H1 (cell line): ENCODE measurements at regions of chr15 and their contacts with region 1.

Region 1: DNA sequence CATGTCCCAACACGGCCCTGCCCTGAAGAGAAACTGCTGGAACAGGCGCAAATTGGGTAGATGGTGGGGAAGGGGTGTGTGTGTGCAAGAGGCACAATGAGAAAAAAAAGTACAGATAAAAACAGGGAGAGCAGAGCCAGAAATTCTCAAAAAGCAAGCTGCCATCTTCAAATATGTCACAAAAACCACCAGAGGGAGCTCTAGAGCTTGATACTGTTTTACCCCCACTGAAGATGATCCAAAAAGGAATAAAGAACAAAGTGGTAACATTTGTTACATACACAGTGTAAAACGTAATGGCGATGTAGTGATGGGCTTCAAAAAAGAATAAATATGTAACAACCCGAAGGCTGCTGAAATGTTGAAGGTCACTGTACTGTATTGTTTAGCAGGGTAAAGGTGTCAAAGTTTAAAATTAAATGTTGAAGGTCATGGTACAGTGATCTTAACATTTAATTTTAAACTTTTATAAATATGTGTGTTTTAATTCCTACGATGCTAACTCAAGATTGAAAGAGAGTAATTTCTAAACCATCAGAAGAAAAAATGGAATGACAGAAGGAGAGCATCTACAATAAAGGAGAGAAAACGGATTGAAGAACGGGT is 6.0 kb downstream of the SNRPA1 start:
- DNase-seq: no peak
- H3K4me3 ChIP-seq: no peak overlapping the region
- H3K27ac ChIP-seq: no peak overlapping the region
- H3K4me1 ChIP-seq: peaks cover 3 to 5% (median 4%) of the 10 kb centered on the region in 4 experiments; a peak in 4 of 7 replicates
- H3K27me3 ChIP-seq: no peaks in the 10 kb centered on the region
- CTCF ChIP-seq: peak in 2 of 3 experiments; percentile 51 to 55; a peak in 2 of 4 replicates
- EP300 ChIP-seq: no peak
- POLR2A ChIP-seq: no peak
- RAD21 ChIP-seq: peak; percentile 61 to 62

Region 2: GRCh38 chr15:101167753-101168463 is 121.1 kb before region 1 on chr15:
- CTCF ChIA-PET with region 1: no interaction called
- POLR2A ChIA-PET with region 1: no interaction called
- DNase-seq: no peak
- H3K4me3 ChIP-seq: no peak overlapping the region
- H3K27ac ChIP-seq: no peak overlapping the region
- H3K4me1 ChIP-seq: peaks cover 0 to 8% (median 0%) of the 10 kb centered on the region in 4 experiments; a peak in 3 of 7 replicates
- H3K27me3 ChIP-seq: no peaks in the 10 kb centered on the region
- CTCF ChIP-seq: no peak
- EP300 ChIP-seq: no peak
- POLR2A ChIP-seq: no peak
- RAD21 ChIP-seq: no peak

Region 3: GRCh38 chr15:101269479-101270223 is 19.4 kb before region 1 on chr15:
- CTCF ChIA-PET with region 1: interaction called, 19 read pairs
- POLR2A ChIA-PET with region 1: interaction called, 3 read pairs
- DNase-seq: no peak
- H3K4me3 ChIP-seq: no peak overlapping the region
- H3K27ac ChIP-seq: no peak overlapping the region
- H3K4me1 ChIP-seq: peaks cover 0 to 2% (median 0%) of the 10 kb centered on the region in 4 experiments; a peak in 1 of 7 replicates
- H3K27me3 ChIP-seq: no peaks in the 10 kb centered on the region
- CTCF ChIP-seq: peak; percentile 70 to 82 (median 77)
- EP300 ChIP-seq: no peak
- POLR2A ChIP-seq: peak in 1 of 2 experiments; percentile 41; a peak in 1 of 3 replicates
- RAD21 ChIP-seq: peak; percentile 51 to 68

Region 4: DNA sequence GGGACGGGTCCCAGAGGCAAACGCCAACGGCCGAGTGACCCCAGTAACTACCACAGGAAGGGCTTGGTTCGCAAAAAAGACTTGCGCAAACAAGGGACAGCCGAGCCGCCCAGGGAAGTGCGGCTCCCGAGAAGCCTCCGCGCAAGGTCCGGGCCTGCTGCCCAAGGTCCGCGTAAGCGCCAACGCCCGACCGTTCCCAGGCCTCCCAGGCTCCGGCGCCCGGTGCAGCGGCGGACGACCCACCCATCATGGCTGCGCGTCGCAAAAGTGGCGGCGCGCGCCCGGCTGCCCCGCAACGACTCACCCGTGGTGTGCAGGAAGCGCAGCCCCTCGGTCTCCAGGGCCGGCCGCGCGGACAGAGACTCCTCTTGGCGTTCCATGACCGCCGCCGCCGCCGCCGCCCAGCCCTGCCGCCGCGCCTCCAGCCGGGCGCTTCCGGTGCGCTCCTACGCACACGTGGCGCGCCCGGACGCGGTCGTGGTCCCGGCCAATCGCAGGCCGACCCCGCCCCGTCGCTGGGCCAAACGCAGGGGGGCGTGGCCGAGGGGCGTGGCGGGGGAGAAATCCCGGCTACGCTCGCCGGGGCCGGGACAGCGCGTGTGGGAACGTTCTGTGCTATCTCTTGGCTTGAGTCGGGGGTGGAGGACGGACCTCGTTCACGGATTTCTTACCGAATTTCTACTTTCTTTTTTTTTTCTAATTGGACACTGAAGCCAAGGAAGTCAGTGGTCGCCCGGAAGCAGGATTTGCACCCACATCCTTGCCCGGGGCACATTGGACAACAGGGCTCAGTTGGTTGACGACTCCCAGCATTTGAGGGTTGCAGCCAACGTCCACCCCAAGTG is 11.8 kb before region 1 on chr15 and contains the start of gene SELENOS:
- CTCF ChIA-PET with region 1: interaction called, 21 read pairs
- POLR2A ChIA-PET with region 1: interaction called, 6 read pairs
- DNase-seq: peak in 1 of 2 experiments; percentile 94
- H3K4me3 ChIP-seq: peak within 1 kb of the TSS; percentile 90 to 94 (median 93)
- H3K27ac ChIP-seq: peak within 1 kb of the TSS; percentile 13; the same call in 1 of the 2 replicates
- H3K4me1 ChIP-seq: peaks cover 0 to 3% (median 1%) of the 10 kb centered on the region in 4 experiments; a peak in 3 of 7 replicates
- H3K27me3 ChIP-seq: no peaks in the 10 kb centered on the region
- CTCF ChIP-seq: no peak
- EP300 ChIP-seq: no peak
- POLR2A ChIP-seq: peak in 1 of 2 experiments; percentile 51; a peak in 2 of 3 replicates
- RAD21 ChIP-seq: no peak
- total RNA-seq, gene SELENOS: 45.2 and 46.0 TPM in 2 replicates

Region 5: GRCh38 chr15:101372149-101372577 is 83.2 kb after region 1 on chr15:
- CTCF ChIA-PET with region 1: no interaction called
- POLR2A ChIA-PET with region 1: no interaction called
- DNase-seq: no peak
- H3K4me3 ChIP-seq: no peak overlapping the region
- H3K27ac ChIP-seq: no peak overlapping the region
- H3K4me1 ChIP-seq: peaks cover 0 to 15% (median 9%) of the 10 kb centered on the region in 4 experiments; a peak in 6 of 7 replicates
- H3K27me3 ChIP-seq: no peaks in the 10 kb centered on the region; a peak in 3 of 7 replicates
- CTCF ChIP-seq: no peak
- EP300 ChIP-seq: no peak
- POLR2A ChIP-seq: no peak
- RAD21 ChIP-seq: no peak

Region 6: DNA sequence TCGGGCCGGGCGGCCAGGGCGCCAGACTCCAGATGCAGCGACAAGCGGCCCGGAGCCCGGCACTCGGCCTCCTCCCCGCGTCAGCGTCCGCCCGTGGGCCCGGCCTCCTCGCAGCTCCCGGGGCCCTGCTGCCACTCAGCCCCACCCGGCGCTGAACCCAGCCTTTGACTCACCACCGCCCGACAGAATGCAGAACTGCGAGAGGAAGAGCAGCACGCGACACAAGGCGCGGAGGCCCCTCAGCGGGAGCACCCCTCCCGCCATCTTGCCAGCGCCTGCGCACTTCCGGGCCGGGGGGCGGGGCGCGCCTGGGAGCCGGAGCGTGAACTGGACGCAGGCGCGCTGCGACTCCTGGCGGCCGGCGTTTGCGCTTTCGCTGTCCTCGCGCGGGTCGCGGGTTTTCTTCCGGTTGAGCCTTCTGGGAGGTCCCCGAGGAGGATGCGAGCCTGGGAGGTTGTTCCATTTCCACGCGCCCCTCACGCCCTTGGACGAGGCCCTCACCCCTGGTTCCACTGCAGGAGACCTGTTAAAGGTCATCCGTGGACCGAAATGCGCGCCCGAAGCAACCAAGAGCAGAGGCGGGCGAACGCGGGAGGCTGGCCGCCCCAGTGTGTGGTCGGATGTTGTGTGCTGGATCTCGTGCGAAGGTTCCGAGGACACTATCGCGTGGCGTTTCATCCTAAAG is 363.2 kb after region 1 on chr15 and contains the start of gene TM2D3:
- CTCF ChIA-PET with region 1: interaction called, 21 read pairs
- POLR2A ChIA-PET with region 1: no interaction called
- DNase-seq: peak; percentile 65 to 94
- H3K4me3 ChIP-seq: peak within 1 kb of the TSS; percentile 87 to 98 (median 95)
- H3K27ac ChIP-seq: peak within 1 kb of the TSS; percentile 46; the same call in 1 of the 2 replicates
- H3K4me1 ChIP-seq: peaks cover 0 to 3% (median 0%) of the 10 kb centered on the region in 4 experiments; a peak in 2 of 7 replicates
- H3K27me3 ChIP-seq: no peaks in the 10 kb centered on the region; a peak in 1 of 7 replicates
- CTCF ChIP-seq: peak; percentile 77 to 79 (median 78)
- EP300 ChIP-seq: no peak
- POLR2A ChIP-seq: peak in 1 of 2 experiments; percentile 75; a peak in 2 of 3 replicates
- RAD21 ChIP-seq: peak; percentile 53 to 66
- total RNA-seq, gene TM2D3: 24.2 and 28.0 TPM in 2 replicates